ENCODE measurements at regions of chr4 and their contacts with region 1.

Region 1: GRCh38 chr4:156169011-156169410 is 215.3 kb upstream of the CTSO start:
- DNase-seq: peak; percentile 76
- H3K4me3 Mint-ChIP-seq: no peak overlapping the region
- H3K27ac Mint-ChIP-seq: peak overlapping the region; percentile 56
- H3K4me1 Mint-ChIP-seq: peaks cover 17% of the 10 kb centered on the region
- H3K27me3 Mint-ChIP-seq: no peaks in the 10 kb centered on the region
- CTCF ChIP-seq: peak; percentile 43

Region 2: GRCh38 chr4:156006192-156006591 is 162.8 kb before region 1 on chr4:
- CTCF ChIA-PET with region 1: no interaction called
- POLR2A ChIA-PET with region 1: no interaction called
- intact Hi-C with region 1: no loop called
- DNase-seq: no peak
- H3K4me3 Mint-ChIP-seq: no peak overlapping the region
- H3K27ac Mint-ChIP-seq: no peak overlapping the region
- H3K4me1 Mint-ChIP-seq: no peaks in the 10 kb centered on the region
- H3K27me3 Mint-ChIP-seq: no peaks in the 10 kb centered on the region
- CTCF ChIP-seq: no peak

Region 3: GRCh38 chr4:156109949-156110900 is 58.8 kb before region 1 on chr4:
- CTCF ChIA-PET with region 1: interaction called, 8 read pairs
- POLR2A ChIA-PET with region 1: no interaction called
- intact Hi-C with region 1: loop called (anchors 2 kb)
- DNase-seq: peak; percentile 81
- H3K4me3 Mint-ChIP-seq: no peak overlapping the region
- H3K27ac Mint-ChIP-seq: peak overlapping the region; percentile 50
- H3K4me1 Mint-ChIP-seq: peaks cover 21% of the 10 kb centered on the region
- H3K27me3 Mint-ChIP-seq: no peaks in the 10 kb centered on the region
- CTCF ChIP-seq: peak; percentile 19

Region 4: DNA sequence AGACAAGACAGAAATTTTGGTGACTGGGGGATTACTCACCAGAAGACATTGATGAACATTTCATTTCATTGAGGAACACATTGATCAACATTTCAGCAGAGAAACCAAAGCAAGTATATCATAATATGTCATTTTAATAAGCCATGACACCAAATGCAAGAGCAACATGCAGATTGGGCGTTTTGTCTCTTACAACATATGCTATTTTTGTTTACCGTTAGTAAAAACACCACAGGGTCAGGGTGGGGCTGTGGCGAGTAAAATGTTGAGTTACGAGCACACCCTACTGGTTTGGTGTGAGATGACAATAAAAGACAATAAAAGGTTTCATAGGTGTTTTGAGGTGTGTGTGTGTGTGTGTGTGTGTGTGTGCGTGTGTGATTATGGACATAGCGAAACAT is 508.1 kb after region 1 on chr4:
- CTCF ChIA-PET with region 1: no interaction called
- POLR2A ChIA-PET with region 1: no interaction called
- intact Hi-C with region 1: loop called (anchors 1 kb)
- DNase-seq: peak; percentile 61
- H3K4me3 Mint-ChIP-seq: no peak overlapping the region
- H3K27ac Mint-ChIP-seq: peak overlapping the region; percentile 21
- H3K4me1 Mint-ChIP-seq: no peaks in the 10 kb centered on the region
- H3K27me3 Mint-ChIP-seq: no peaks in the 10 kb centered on the region
- CTCF ChIP-seq: peak; percentile 25

Region 5: GRCh38 chr4:157128395-157128794 is 959.4 kb after region 1 on chr4:
- CTCF ChIA-PET with region 1: no interaction called
- POLR2A ChIA-PET with region 1: no interaction called
- intact Hi-C with region 1: loop called (anchors 1 kb)
- DNase-seq: peak; percentile 38
- H3K4me3 Mint-ChIP-seq: no peak overlapping the region
- H3K27ac Mint-ChIP-seq: no peak overlapping the region
- H3K4me1 Mint-ChIP-seq: no peaks in the 10 kb centered on the region
- H3K27me3 Mint-ChIP-seq: no peaks in the 10 kb centered on the region
- CTCF ChIP-seq: peak; percentile 64

Measured in MCF 10A (cell line).